Activated naive CD4-positive, alpha-beta T cell treated with anti-CD3 and anti-CD28 coated beads, Interleukin-2, amount 10 ng/mL, durations not matched to agents 7 days and 5 days (primary cell): ENCODE measurements at regions of chr3 and their contacts with region 1.

Region 1: DNA sequence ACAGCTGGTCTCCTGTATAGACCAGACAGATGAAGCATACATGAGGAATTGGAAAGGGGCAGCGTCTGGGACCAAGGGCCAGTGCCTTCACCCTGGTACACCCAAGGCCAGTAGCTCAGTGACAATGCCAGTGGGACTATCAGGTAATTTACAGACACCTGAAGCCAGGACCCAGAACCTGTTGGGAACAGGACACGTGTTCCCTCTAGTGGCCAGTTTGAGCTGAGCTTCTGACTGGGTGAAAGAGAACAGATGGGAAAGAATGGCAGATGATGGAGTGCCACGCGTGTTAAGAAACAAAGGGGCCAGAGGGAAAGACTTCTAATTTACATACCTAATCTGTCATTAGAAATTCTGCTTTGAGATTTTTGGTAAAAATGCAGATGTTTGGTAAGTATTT is 5.1 kb upstream of the SLC25A38 start:
- DNase-seq: peak; percentile 78
- H3K4me3 Mint-ChIP-seq: no peak overlapping the region
- H3K27ac Mint-ChIP-seq: no peak overlapping the region
- H3K4me1 Mint-ChIP-seq: peaks cover 11% of the 10 kb centered on the region
- H3K27me3 Mint-ChIP-seq: peaks cover 5% of the 10 kb centered on the region

Region 2: DNA sequence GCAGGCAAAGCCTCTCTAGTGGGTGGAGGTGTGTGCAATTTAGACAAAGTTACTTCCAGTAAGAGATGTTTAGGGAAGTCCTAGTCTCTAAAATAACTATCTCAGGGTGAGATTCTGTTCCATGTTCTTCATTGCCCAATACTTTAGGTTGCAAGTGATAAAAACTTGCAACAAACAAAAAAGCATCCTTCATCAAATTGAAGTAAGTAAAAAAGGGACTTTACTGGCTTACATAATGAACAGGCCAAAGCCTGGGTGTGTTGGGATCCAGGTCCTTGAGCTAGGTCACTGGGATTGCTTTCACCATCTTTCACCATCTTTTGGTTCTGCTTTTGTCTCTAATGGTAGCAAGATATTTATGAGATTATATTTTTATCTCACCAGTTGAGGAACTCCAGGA is 136.5 kb before region 1 on chr3:
- CTCF ChIA-PET with region 1: no interaction called
- DNase-seq: no peak
- H3K4me3 Mint-ChIP-seq: no peak overlapping the region
- H3K27ac Mint-ChIP-seq: no peak overlapping the region
- H3K4me1 Mint-ChIP-seq: no peaks in the 10 kb centered on the region
- H3K27me3 Mint-ChIP-seq: peaks cover 51% of the 10 kb centered on the region

Region 3: DNA sequence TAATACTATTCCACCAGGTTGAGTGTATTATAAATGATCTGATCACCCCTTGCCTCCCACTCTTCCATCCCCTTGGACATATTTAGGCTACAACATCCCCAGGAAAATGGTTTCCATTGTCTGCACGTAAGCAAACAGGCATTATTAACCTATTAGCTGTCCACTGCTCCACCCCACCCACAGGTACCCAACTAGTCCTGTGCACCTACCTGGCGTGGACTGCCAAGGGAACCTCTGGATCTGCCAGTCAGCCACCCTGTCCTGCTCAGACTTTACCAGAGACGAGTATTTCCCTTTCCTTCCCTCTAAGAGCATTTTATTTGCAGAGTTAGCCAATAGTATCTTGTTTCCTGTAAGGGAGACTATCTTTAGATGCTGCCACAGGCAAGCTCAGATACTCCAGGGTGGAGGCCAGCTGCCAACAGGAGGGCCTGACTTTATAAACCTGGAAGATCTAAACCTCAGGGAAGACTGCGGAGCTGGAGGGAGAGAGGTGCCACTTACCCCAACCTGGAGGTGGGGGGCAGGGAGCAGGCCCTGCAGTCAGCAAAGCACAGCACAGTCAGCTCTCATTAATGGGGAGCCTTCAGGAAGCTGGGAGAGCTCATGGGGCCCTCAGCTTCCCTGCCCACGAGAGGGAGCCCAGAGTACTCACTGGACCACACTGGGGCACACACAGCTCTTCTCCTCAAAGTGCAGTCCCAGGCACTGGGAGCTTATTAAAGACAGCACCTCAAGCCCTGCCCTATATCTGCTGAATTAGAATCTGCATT is 98.2 kb before region 1 on chr3 and contains the start of gene CX3CR1:
- CTCF ChIA-PET with region 1: no interaction called
- DNase-seq: no peak
- H3K4me3 Mint-ChIP-seq: no peak within 1 kb of the TSS
- H3K27ac Mint-ChIP-seq: no peak within 1 kb of the TSS
- H3K4me1 Mint-ChIP-seq: peaks cover 62% of the 10 kb centered on the region
- H3K27me3 Mint-ChIP-seq: peaks cover 52% of the 10 kb centered on the region

Region 4: DNA sequence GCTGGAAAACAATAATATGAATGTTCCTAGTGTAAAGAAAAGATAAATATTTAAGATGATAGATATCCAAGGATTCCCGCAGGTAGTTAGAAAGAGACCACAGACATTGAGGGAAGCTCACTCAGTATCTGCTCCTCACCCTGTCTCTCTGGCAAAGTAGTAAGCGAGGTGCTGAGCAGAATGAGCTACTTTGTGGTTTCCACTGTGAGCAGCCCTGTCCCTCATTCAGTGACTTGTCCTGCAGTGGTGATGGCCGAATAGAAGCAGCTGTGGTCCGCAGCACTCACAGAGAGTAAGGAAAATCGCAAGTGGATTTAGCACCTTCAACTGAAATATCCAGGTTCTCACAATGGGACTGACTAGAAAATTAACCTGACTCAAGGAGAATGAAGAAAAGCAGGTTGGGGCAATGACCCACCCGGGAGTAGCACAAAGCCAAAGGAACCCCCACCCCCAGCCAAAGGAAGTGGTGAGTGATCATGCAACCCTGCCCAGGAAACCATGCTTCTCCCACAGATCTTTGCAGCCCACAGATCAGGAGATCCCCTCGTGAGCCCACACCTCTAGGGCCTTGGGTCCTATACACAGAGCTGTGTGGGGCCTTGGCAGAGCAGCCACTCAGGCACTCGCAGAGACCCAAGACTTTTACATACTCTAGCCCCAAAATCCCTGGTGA is 16.7 kb before region 1 on chr3:
- CTCF ChIA-PET with region 1: interaction called, 11 read pairs
- DNase-seq: peak; percentile 74
- H3K4me3 Mint-ChIP-seq: peak overlapping the region; percentile 42
- H3K27ac Mint-ChIP-seq: peak overlapping the region; percentile 86
- H3K4me1 Mint-ChIP-seq: peaks cover 64% of the 10 kb centered on the region
- H3K27me3 Mint-ChIP-seq: peaks cover 31% of the 10 kb centered on the region